Heart left ventricle (tissue), 16 donors: ENCODE measurements at regions of chr10 and their contacts with region 1.

Region 1: DNA sequence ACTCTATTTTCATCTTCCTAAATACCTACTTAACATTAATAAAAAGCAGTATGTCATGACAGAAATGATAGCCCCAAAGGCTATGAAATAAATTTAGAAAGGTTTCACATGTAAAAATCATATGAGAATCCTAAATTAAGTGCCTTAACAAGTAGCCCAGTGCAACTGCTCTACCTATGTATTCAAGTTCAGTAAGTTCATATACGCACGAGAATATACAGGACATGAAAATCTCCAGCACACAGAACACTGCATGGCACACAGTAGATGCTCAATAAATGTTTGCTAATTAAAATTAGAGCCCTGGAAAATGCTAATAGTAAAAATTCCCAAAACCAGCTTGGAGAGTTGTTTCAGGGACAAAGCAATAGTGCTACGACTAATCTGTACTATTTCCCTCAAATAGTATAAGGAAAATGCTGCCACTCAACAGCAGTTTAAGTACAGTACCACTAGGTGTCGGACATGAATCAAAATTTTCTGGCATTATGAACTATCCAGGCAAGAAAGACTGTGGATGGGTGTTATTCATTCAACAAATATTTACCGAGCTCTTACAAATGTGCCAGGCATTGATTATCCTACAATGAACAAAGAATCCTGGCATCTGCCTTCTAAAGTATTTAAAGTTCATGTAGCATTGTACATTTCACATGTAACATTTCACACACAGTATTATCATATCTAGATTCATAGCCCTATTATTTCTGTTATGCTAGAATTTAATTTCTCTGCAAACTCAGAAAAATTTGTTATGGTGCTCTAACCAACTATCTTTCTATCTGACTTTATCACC is 80.9 kb downstream of the ARHGAP21 start:
- DNase-seq: peak in 1 of 5 donors; percentile 16
- ATAC-seq: peak; percentile 61 to 91 (median 88)
- H3K4me3 ChIP-seq: no peak overlapping the region
- H3K27ac ChIP-seq: no peak overlapping the region
- H3K4me1 ChIP-seq: peaks cover 0 to 50% (median 15%) of the 10 kb centered on the region in 12 donors
- H3K27me3 ChIP-seq: no peaks in the 10 kb centered on the region
- CTCF ChIP-seq: peak; percentile 66 to 87 (median 81)
- POLR2A ChIP-seq: no peak

Region 2: DNA sequence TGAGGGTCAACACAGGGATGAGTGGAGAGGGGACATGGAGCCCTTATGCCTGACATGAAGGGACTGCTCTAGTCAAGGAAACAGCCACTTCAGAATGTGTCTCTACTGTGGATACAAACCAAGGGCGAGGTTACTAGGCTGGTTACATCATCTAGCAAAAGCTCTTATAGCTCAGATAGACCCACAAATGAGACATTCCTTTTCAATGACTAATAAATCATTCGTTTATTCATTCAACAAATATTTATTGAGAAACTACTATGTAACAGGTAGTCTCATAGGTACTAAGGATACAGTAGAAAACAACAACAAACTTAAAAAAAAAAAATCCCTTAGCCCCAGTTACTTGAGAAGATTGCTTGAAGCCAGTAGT is 214.4 kb before region 1 on chr10:
- intact Hi-C with region 1: no loop called
- DNase-seq: no peak
- ATAC-seq: no peak
- H3K4me3 ChIP-seq: no peak overlapping the region
- H3K27ac ChIP-seq: no peak overlapping the region
- H3K4me1 ChIP-seq: no peaks in the 10 kb centered on the region
- H3K27me3 ChIP-seq: no peaks in the 10 kb centered on the region
- CTCF ChIP-seq: no peak
- POLR2A ChIP-seq: no peak

Region 3: DNA sequence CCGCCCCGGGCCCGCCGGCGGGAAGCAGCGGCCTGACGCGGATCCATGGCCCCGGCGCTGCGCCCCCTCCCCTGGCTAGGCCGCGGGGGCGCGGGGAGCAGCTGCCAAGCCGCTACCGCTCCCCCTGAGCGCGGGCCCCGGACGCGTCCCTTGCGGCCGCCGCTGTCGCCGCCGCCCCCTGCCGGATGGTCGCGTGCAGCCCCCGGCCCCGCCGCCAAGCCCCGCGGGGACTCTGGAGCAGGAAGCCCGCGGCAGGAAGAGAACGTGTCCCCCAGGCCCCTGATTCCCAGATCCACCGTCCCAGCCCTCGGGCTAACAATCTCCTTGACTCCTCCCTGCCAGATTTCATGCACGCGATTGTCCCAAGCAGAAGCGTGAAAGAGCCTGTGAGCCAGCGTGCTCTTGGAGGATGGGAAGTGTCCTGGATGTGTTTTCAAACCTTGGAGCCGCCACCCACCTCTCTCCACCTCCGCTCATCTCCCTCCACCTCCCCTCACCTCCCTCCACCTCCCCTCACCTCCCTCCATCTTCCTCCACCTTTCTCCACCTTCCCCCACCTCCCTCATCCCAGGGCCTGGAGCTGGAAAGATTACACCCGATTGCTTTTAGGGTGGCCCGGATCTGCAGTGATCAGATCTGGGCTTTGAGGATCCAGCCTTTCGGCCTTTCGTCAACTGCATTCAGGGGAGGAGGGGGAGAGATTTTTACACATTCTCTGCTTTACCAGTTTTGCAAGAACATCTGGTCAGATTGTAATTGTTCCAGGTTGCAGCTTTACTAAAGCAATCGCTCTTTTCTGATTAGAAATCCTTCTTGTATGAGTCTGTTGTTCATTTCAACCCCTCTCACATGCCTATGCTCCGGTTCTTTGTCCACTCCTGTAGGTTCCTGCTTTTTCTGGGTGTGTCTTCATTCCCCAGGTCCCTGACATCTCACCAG is 310.2 kb after region 1 on chr10:
- intact Hi-C with region 1: loop called in 3 of 10 experiments (anchors 5 to 10 kb)
- DNase-seq: peak; percentile 47 to 79 (median 57)
- ATAC-seq: peak; percentile 18 to 65 (median 58)
- H3K4me3 ChIP-seq: peak overlapping the region; percentile 47 to 73 (median 64)
- H3K27ac ChIP-seq: peak overlapping the region; percentile 21 to 86 (median 79)
- H3K4me1 ChIP-seq: peaks cover 0 to 28% (median 12%) of the 10 kb centered on the region in 12 donors
- H3K27me3 ChIP-seq: no peaks in the 10 kb centered on the region
- CTCF ChIP-seq: peak in 10 of 12 donors; percentile 20 to 57 (median 46)
- POLR2A ChIP-seq: no peak

Region 4: GRCh38 chr10:24982319-24983112 is 339.7 kb after region 1 on chr10:
- intact Hi-C with region 1: loop called in 3 of 10 experiments (anchors 5 to 10 kb)
- DNase-seq: no peak
- ATAC-seq: no peak
- H3K4me3 ChIP-seq: no peak overlapping the region
- H3K27ac ChIP-seq: peak overlapping the region in 3 of 12 donors; percentile 28 to 70 (median 48)
- H3K4me1 ChIP-seq: peaks cover 0 to 27% (median 5%) of the 10 kb centered on the region in 12 donors
- H3K27me3 ChIP-seq: no peaks in the 10 kb centered on the region
- CTCF ChIP-seq: no peak
- POLR2A ChIP-seq: no peak

Region 5: GRCh38 chr10:24989867-24990266 is 347.0 kb after region 1 on chr10:
- intact Hi-C with region 1: loop called in 9 of 10 experiments (anchors 2 to 10 kb)
- DNase-seq: no peak
- ATAC-seq: no peak
- H3K4me3 ChIP-seq: no peak overlapping the region
- H3K27ac ChIP-seq: no peak overlapping the region
- H3K4me1 ChIP-seq: peaks cover 0 to 14% (median under 1%) of the 10 kb centered on the region in 12 donors
- H3K27me3 ChIP-seq: no peaks in the 10 kb centered on the region
- CTCF ChIP-seq: peak in 8 of 12 donors; percentile 11 to 53 (median 38)
- POLR2A ChIP-seq: no peak

Region 6: DNA sequence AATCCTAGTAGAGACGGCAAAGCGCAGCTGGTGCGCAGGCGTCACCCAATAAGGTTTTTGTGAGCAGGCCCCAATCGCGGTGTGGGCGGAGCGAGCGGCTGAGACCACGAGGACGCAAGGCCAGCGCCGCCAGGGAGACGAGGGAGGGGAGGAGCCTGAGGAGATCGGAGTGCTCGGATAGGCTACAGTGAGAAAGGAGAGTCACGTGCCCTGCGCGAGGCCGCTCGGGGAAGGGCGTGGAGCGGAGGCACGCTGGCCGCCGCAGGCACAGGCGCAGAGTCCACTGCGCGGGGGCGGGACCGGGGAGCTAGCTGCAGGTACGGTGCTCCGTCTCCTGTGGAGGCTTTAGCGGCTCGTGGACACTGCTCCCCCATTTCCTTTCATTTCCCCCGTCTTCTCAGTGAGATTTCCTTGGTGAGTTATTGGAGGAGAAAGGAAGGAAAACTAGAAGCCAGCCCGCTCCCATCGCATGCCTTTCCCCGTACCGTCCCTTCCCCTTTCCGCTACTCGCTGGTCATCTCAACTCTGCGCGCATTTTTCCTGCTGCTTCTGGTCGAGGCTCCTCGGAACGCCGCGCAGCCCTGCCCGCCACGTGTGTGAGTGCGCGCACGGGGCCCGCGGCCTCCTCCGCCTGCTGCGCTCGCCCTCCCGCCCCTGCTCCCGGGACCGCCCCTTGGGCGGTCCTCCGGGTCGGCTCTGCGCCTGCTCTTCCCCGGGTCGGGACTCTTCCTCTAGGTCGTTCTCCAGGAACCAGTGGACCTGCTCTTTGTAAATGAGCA is 373.7 kb after region 1 on chr10 and contains the start of gene THNSL1:
- intact Hi-C with region 1: loop called in 2 of 10 experiments (anchors 5 to 10 kb)
- DNase-seq: peak; percentile 99 to 100 (median 99)
- ATAC-seq: peak; percentile 100
- H3K4me3 ChIP-seq: peak within 1 kb of the TSS; percentile 41 to 80 (median 68)
- H3K27ac ChIP-seq: peak within 1 kb of the TSS; percentile 72 to 98 (median 92)
- H3K4me1 ChIP-seq: peaks cover 0 to 23% (median 9%) of the 10 kb centered on the region in 12 donors
- H3K27me3 ChIP-seq: no peaks in the 10 kb centered on the region
- CTCF ChIP-seq: no peak
- POLR2A ChIP-seq: peak in 1 of 2 donors; percentile 70
- total RNA-seq, gene THNSL1: 1.9 to 6.9 (median 4.1) TPM

Region 7: DNA sequence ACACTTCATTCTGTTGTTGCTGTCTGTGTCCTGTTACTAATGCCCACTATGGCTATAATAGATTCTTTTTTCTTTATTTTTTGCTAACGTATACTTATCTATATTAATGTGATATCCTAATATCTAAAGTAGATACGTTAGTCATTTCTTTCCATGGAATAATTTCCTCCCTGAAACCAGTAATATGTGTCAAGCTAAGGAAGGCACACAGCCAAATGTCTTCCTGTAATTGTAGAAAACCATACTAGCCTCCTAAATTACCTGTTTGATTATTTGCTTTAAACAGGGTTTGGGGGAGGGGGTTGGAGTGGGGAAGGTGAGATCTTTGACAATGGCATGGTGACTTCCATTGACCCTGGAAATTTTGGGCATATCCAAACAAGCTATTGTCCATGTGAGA is 430.0 kb after region 1 on chr10:
- intact Hi-C with region 1: loop called in 2 of 10 experiments (anchors 5 to 10 kb)
- DNase-seq: no peak
- ATAC-seq: no peak
- H3K4me3 ChIP-seq: no peak overlapping the region
- H3K27ac ChIP-seq: no peak overlapping the region
- H3K4me1 ChIP-seq: no peaks in the 10 kb centered on the region
- H3K27me3 ChIP-seq: no peaks in the 10 kb centered on the region
- CTCF ChIP-seq: no peak
- POLR2A ChIP-seq: no peak

Region 8: GRCh38 chr10:25080880-25081581 is 438.2 kb after region 1 on chr10:
- intact Hi-C with region 1: loop called (anchors 1 to 10 kb)
- DNase-seq: peak; percentile 68 to 88 (median 86)
- ATAC-seq: peak; percentile 88 to 98 (median 96)
- H3K4me3 ChIP-seq: peak overlapping the region in 1 of 12 donors; percentile 22
- H3K27ac ChIP-seq: peak overlapping the region in 8 of 12 donors; percentile 23 to 68 (median 53)
- H3K4me1 ChIP-seq: peaks cover 0 to 26% (median 8%) of the 10 kb centered on the region in 12 donors
- H3K27me3 ChIP-seq: no peaks in the 10 kb centered on the region
- CTCF ChIP-seq: peak; percentile 82 to 97 (median 90)
- POLR2A ChIP-seq: no peak